PC-3 (cell line): ENCODE measurements at regions of chr1 and their contacts with region 1.

Region 1: DNA sequence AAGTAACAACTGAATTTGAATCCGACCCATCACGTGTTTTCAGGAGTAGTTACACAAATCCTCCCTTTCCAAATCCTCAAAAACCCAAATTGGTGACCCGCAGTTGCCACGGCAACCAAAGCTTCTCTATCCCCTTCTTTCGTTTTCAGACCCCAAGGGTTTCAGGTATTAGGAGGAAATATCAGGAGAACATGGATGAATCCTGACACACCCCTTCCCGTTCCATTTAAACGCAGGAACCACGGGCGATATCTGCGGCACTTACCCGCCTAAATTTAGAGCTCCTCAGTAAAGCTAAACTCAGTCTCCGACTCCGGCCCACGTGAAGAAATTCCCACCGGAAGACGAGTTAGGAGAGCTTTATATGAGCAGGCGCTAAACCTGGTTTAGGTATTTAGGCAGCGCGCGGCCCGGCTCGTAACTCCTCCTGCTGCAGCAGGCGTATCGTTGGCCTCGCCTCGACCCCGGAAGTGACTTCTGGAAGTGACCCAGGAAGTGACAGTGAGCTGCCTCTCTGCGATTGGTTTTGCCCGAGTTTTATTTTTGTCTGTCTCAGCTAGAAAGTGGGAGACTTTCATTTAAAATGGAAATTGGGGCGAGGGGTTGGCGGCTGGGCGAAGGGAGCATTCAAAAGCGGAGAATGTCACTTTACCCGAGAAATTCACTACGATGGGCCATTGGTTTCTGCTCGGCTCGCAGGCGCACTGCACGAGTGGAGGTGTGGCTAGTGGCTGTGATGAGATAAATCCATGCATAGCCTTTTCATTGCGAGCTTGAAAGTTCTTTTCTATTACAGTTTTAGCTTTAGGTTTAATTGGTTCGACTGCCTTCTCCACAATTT is at the start of gene TAF1A:
- DNase-seq: peak; percentile 98
- ATAC-seq: peak; percentile 91
- H3K4me3 ChIP-seq: peak within 1 kb of the TSS; percentile 78
- H3K27ac ChIP-seq: peak within 1 kb of the TSS; percentile 41
- H3K4me1 ChIP-seq: peaks cover 36% of the 10 kb centered on the region
- H3K27me3 ChIP-seq: no peaks in the 10 kb centered on the region
- CTCF ChIP-seq: no peak
- total RNA-seq, gene TAF1A: 27.9 and 29.4 TPM in 2 replicates

Region 2: DNA sequence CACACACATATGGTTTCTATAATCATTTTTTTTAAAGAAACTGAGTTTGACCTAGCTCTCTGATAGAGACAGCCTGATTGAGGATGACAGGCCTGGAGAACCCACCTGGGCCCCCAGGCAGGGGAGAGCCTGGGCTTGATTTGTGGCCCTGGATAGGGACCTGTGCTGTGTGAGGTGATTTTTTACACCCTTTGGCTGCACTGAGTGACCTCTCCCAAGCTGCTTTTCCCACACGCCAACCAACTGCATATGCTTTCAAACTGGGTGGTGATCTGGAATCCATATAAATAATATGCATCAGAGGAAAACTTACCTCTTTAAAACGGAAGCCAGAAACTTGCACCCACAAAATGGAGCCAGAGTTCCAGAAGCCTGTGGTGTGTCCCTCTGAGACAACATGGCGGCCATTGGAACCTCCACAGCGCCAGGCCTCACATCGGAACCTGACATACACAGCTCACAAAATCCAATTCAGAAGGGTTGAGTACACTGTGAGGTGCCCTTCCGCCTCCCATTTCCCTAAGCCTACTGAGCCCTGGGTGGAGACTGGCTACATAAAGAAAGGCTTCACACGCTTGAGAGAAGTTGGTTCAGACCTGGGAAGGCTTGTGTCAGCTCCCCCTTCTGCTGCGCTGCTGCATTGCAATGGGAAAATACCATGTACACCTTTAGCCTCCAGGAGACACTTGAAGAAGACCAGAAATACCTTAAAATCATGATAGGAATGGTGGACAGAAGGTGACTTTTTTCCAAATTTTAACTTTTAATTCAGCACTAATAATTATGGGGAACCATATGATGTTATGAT is 202.5 kb before region 1 on chr1:
- CTCF ChIA-PET with region 1: no interaction called
- POLR2A ChIA-PET with region 1: no interaction called
- intact Hi-C with region 1: no loop called
- DNase-seq: peak; percentile 42
- ATAC-seq: peak; percentile 27; the same call in 1 of the 2 replicates
- H3K4me3 ChIP-seq: no peak overlapping the region
- H3K27ac ChIP-seq: no peak overlapping the region
- H3K4me1 ChIP-seq: no peaks in the 10 kb centered on the region
- H3K27me3 ChIP-seq: no peaks in the 10 kb centered on the region
- CTCF ChIP-seq: peak; percentile 60

Region 3: GRCh38 chr1:222529916-222530315 is 59.8 kb before region 1 on chr1:
- CTCF ChIA-PET with region 1: no interaction called
- POLR2A ChIA-PET with region 1: interaction called, 10 read pairs
- intact Hi-C with region 1: no loop called
- DNase-seq: no peak
- ATAC-seq: no peak
- H3K4me3 ChIP-seq: no peak overlapping the region
- H3K27ac ChIP-seq: no peak overlapping the region
- H3K4me1 ChIP-seq: no peaks in the 10 kb centered on the region
- H3K27me3 ChIP-seq: no peaks in the 10 kb centered on the region
- CTCF ChIP-seq: no peak

Region 4: GRCh38 chr1:222554177-222554576 is 35.5 kb before region 1 on chr1:
- CTCF ChIA-PET with region 1: no interaction called
- POLR2A ChIA-PET with region 1: interaction called, 12 read pairs
- intact Hi-C with region 1: no loop called
- DNase-seq: peak; percentile 54
- ATAC-seq: peak; percentile 70
- H3K4me3 ChIP-seq: no peak overlapping the region
- H3K27ac ChIP-seq: no peak overlapping the region
- H3K4me1 ChIP-seq: peaks cover 9% of the 10 kb centered on the region; the same call in 1 of the 2 replicates
- H3K27me3 ChIP-seq: no peaks in the 10 kb centered on the region
- CTCF ChIP-seq: no peak

Region 5: GRCh38 chr1:222600281-222600680 is 10.6 kb after region 1 on chr1:
- CTCF ChIA-PET with region 1: no interaction called
- POLR2A ChIA-PET with region 1: no interaction called
- intact Hi-C with region 1: loop called (anchors 1 kb)
- DNase-seq: peak; percentile 92
- ATAC-seq: peak; percentile 87
- H3K4me3 ChIP-seq: peak overlapping the region; percentile 1; the same call in 1 of the 2 replicates
- H3K27ac ChIP-seq: peak overlapping the region; percentile 70
- H3K4me1 ChIP-seq: peaks cover 32% of the 10 kb centered on the region
- H3K27me3 ChIP-seq: no peaks in the 10 kb centered on the region
- CTCF ChIP-seq: no peak

Region 6: GRCh38 chr1:222736972-222737371 is 147.3 kb after region 1 on chr1 and contains the start of gene FAM177B:
- CTCF ChIA-PET with region 1: no interaction called
- POLR2A ChIA-PET with region 1: no interaction called
- intact Hi-C with region 1: no loop called
- DNase-seq: peak; percentile 93
- ATAC-seq: peak; percentile 94
- H3K4me3 ChIP-seq: no peak within 1 kb of the TSS
- H3K27ac ChIP-seq: peak within 1 kb of the TSS; percentile 35
- H3K4me1 ChIP-seq: peaks cover 17% of the 10 kb centered on the region
- H3K27me3 ChIP-seq: no peaks in the 10 kb centered on the region
- CTCF ChIP-seq: no peak
- total RNA-seq, gene FAM177B: not detected in 2 replicates